HAP-1 (cell line): ENCODE measurements at regions of chr6 and their contacts with region 1.

Region 1: DNA sequence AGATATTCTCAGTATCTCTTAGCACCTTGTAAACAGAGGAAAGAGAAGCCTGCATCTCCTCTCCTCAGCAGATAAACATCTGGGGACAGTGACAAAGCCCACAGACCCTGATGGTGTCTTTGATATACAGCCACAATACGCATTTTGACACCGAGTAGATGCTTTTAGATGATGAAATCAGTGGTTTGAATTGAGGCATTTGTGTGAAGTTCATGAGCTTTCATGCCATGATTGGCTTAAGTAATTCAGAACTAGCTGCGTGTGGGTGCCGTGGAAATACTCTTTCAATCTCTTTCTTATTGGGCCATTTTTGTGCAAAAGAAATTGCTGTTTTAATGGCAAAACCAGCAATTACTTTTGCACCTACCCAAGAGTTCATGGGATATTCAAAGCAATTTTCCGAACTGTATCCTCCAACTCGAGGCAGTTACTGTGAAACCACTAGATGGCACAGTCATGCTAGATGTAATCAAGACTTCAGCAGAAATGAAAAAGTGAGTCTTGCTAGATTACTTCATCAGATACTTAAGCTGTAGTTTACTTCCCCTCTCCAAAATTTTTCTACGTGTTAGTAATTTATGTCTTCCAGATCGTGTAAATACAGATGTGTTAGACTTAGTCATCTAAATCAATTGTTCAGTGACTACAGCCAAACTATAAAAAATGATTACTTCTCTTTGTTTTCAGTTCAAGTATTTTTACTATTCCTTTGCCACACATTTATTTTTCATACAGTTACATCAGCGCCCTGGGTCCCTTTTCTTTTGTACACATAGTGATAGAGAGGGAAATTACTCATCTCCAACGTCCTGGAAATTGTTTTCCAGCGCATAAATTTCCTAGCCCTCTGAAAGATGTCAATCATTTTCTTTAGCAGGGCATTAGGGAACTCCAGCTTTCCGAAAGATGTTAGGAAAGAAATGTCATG is 49.4 kb downstream of the IYD start:
- DNase-seq: peak; percentile 55 to 88
- H3K4me3 ChIP-seq: no peak overlapping the region
- H3K4me1 ChIP-seq: peaks cover 23% of the 10 kb centered on the region
- H3K27me3 ChIP-seq: no peaks in the 10 kb centered on the region

Region 2: GRCh38 chr6:150169609-150170008 is 248.6 kb before region 1 on chr6:
- in situ Hi-C with region 1: no loop called
- DNase-seq: no peak
- H3K4me3 ChIP-seq: no peak overlapping the region
- H3K4me1 ChIP-seq: no peaks in the 10 kb centered on the region
- H3K27me3 ChIP-seq: no peaks in the 10 kb centered on the region

Region 3: GRCh38 chr6:150452428-150453243 is 34.5 kb after region 1 on chr6:
- in situ Hi-C with region 1: no loop called
- DNase-seq: peak in 1 of 2 experiments; percentile 12
- H3K4me3 ChIP-seq: no peak overlapping the region
- H3K4me1 ChIP-seq: peaks cover 3% of the 10 kb centered on the region; the same call in 1 of the 2 replicates
- H3K27me3 ChIP-seq: no peaks in the 10 kb centered on the region

Region 4: DNA sequence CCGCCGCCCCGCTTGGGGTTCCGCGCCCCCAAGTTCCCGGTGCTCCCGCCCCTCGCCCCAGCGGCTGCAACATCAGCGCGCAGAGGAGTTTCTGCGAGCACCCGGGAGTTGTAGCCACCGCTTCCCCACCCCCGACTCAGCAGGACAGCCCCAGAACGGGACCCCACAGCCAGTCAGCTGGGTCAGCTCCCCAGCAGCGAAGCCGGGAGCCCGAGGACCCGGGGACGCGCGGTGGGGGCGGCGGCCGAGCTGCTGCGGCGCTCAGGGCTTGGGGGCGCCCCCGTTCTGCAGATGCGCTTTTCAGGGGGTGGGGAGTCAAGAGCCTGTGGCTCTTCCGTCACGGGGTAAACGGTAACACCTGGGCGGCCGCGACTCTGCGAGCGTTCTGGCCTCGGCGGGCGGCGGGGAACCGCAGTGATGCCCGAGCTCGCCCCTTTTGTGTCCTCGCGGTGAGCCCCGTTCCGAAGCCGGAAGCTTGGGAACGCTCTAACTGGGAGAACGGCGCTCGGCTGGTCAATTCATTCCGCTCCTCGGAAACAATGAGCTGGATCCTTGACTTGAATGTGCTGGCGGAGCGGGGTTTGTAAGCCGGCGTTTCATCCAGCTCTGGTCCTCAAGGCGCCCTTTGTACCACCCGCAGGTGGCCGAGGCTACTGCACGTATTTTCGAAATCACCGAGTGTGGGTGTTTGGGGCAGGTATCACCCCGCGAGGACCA is 182.3 kb after region 1 on chr6:
- in situ Hi-C with region 1: loop called (anchors 10 kb)
- DNase-seq: peak; percentile 92 to 94
- H3K4me3 ChIP-seq: peak overlapping the region; percentile 73
- H3K4me1 ChIP-seq: peaks cover 23% of the 10 kb centered on the region
- H3K27me3 ChIP-seq: no peaks in the 10 kb centered on the region

Region 5: DNA sequence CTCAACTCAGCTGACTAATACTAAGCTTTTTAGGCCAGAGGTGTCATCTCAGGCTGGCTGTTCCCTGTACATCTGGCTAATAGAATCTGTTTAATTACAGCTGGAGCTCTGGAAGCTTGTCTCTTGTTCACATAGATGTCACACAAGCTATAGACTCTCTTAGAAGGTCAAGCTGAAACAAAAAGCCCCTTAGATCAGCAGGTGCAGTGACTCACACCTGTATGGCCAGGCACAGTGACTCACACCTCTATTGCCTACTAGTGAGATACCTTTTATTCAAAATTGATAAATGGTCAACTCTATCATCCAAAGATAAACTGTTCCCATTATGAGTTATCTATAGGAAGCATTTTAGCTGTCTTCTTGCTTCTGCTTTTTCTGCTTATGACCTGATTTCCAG is 417.5 kb after region 1 on chr6:
- in situ Hi-C with region 1: no loop called
- DNase-seq: no peak
- H3K4me3 ChIP-seq: no peak overlapping the region
- H3K4me1 ChIP-seq: no peaks in the 10 kb centered on the region
- H3K27me3 ChIP-seq: no peaks in the 10 kb centered on the region